Mammary epithelial cell (primary cell): ENCODE measurements at regions of chr12 and their contacts with region 1.

Region 1: GRCh38 chr12:89162704-89163261 is 189.5 kb downstream of the DUSP6 start:
- DNase-seq: peak; percentile 100
- H3K4me3 ChIP-seq: no peak overlapping the region
- H3K27ac ChIP-seq: peak overlapping the region; percentile 77
- H3K4me1 ChIP-seq: peaks cover 44% of the 10 kb centered on the region
- H3K27me3 ChIP-seq: no peaks in the 10 kb centered on the region
- CTCF ChIP-seq: no peak

Region 2: GRCh38 chr12:89067421-89068187 is 95.2 kb before region 1 on chr12:
- CTCF ChIA-PET with region 1: no interaction called
- dilution Hi-C with region 1: no loop called
- in situ Hi-C with region 1: no loop called
- intact Hi-C with region 1: loop called (anchors 1 kb)
- DNase-seq: peak; percentile 95
- H3K4me3 ChIP-seq: no peak overlapping the region
- H3K27ac ChIP-seq: peak overlapping the region; percentile 77
- H3K4me1 ChIP-seq: peaks cover 40% of the 10 kb centered on the region
- H3K27me3 ChIP-seq: no peaks in the 10 kb centered on the region
- CTCF ChIP-seq: no peak

Region 3: GRCh38 chr12:89179983-89180382 is 17.2 kb after region 1 on chr12:
- CTCF ChIA-PET with region 1: no interaction called
- dilution Hi-C with region 1: no loop called
- in situ Hi-C with region 1: no loop called
- intact Hi-C with region 1: loop called (anchors 1 kb)
- DNase-seq: peak; percentile 97
- H3K4me3 ChIP-seq: no peak overlapping the region
- H3K27ac ChIP-seq: peak overlapping the region; percentile 81
- H3K4me1 ChIP-seq: peaks cover 41% of the 10 kb centered on the region
- H3K27me3 ChIP-seq: no peaks in the 10 kb centered on the region
- CTCF ChIP-seq: no peak

Region 4: DNA sequence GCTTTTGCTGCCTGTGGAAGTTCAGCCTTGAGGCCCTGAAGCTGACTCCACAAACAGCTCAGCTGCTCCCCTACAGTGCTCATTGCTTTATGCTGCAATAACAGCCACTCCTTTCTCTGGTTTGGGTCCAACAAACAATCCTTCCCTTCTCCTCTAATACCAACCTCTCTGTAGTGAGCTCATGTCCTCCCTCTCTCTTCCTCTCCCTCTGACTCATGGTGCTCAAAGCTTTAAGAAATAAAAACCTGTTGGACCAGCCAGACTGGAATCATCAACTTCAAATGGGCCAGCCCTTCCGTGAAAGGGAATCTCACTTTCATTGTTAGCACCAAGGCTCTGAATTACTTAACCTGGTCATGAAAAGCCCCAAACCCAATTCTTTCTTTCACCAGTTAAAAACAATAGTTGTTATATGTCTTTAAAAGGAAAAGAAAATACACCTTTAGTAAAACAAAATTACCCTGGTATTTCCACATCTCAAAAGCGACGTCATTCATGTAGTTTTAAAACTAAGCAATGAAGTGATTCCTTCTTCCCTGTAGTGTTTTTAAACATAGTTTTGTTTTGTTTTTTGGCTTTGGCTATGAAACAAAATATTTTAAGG is 63.1 kb after region 1 on chr12:
- CTCF ChIA-PET with region 1: no interaction called
- dilution Hi-C with region 1: loop called (anchors 5 kb)
- in situ Hi-C with region 1: no loop called
- intact Hi-C with region 1: loop called (anchors 1 kb)
- DNase-seq: peak; percentile 99
- H3K4me3 ChIP-seq: peak overlapping the region in 1 of 3 experiments; percentile 5
- H3K27ac ChIP-seq: peak overlapping the region; percentile 96
- H3K4me1 ChIP-seq: peaks cover 37% of the 10 kb centered on the region
- H3K27me3 ChIP-seq: no peaks in the 10 kb centered on the region
- CTCF ChIP-seq: no peak

Region 5: GRCh38 chr12:89245075-89245474 is 82.3 kb after region 1 on chr12:
- CTCF ChIA-PET with region 1: no interaction called
- dilution Hi-C with region 1: no loop called
- in situ Hi-C with region 1: no loop called
- intact Hi-C with region 1: no loop called
- DNase-seq: no peak
- H3K4me3 ChIP-seq: no peak overlapping the region
- H3K27ac ChIP-seq: no peak overlapping the region
- H3K4me1 ChIP-seq: peaks cover 24% of the 10 kb centered on the region
- H3K27me3 ChIP-seq: no peaks in the 10 kb centered on the region
- CTCF ChIP-seq: no peak

Region 6: DNA sequence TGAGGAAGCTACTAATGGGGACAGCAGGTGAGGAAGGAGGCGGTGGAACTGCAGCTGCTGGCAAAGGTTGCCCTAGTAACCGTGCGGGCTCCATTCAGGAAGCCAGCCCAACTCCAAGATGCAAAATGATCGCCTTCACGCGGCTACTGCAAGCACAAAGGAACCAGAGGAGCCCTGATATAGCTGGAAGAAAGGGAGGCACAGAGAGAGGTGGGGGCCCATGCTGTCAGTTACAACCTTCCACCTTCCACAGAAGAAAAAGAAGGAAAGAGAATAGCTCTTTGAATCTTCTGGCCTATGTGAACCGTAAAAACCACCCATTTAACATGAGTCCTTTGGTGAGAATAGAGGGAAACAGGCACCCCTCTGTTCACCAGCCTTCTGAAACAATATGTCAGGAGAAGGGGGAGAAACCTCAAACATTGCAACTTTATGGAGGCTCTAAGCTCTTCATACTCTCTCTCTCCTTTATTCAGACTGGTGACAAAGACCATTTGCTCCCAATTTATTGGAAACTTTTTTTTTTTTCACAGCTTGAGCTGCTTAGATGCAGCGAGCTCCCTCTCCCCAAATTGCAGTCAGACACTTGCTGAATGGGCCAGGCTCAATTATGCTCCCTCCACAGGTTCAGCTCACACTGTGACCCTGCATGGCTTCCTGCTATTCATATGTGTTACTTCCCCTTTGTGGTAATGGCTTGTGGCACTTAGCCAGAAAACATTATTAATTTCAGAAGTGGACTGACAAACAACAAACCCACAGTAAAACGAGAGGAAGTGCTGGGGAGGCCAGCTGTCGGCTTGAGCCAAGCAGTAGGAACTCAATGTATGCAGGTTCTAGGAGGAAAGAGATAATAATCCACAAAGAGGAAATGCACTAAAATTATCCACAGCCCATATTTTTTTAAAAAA is 183.3 kb after region 1 on chr12:
- CTCF ChIA-PET with region 1: no interaction called
- dilution Hi-C with region 1: no loop called
- in situ Hi-C with region 1: loop called in 1 of 2 experiments (anchors 10 kb)
- intact Hi-C with region 1: no loop called
- DNase-seq: peak; percentile 82
- H3K4me3 ChIP-seq: no peak overlapping the region
- H3K27ac ChIP-seq: peak overlapping the region; percentile 19
- H3K4me1 ChIP-seq: peaks cover 17% of the 10 kb centered on the region
- H3K27me3 ChIP-seq: no peaks in the 10 kb centered on the region
- CTCF ChIP-seq: no peak

Region 7: GRCh38 chr12:89352492-89353187 is 189.9 kb after region 1 on chr12 and contains the start of gene DUSP6:
- CTCF ChIA-PET with region 1: no interaction called
- dilution Hi-C with region 1: no loop called
- in situ Hi-C with region 1: loop called in 1 of 2 experiments (anchors 10 kb)
- intact Hi-C with region 1: loop called (anchors 1 kb)
- DNase-seq: peak; percentile 100
- H3K4me3 ChIP-seq: peak within 1 kb of the TSS; percentile 85 to 93 (median 92)
- H3K27ac ChIP-seq: peak within 1 kb of the TSS; percentile 91
- H3K4me1 ChIP-seq: peaks cover 43% of the 10 kb centered on the region
- H3K27me3 ChIP-seq: no peaks in the 10 kb centered on the region
- CTCF ChIP-seq: no peak
- total RNA-seq, gene DUSP6: 190 to 291 TPM